SK-N-SH (cell line): ENCODE measurements at regions of chr1 and their contacts with region 1.

Region 1: GRCh38 chr1:225474986-225475820 is 47.4 kb upstream of the LBR start:
- DNase-seq: peak; percentile 93
- H3K4me3 ChIP-seq: peak overlapping the region; percentile 17 to 46; a peak in 2 of 4 replicates
- H3K27ac ChIP-seq: no peak overlapping the region
- H3K4me1 ChIP-seq: peaks cover 0 to 6% of the 10 kb centered on the region in 2 experiments; a peak in 2 of 4 replicates
- H3K27me3 ChIP-seq: no peaks in the 10 kb centered on the region
- CTCF ChIP-seq: peak; percentile 100
- EP300 ChIP-seq: no peak
- RAD21 ChIP-seq: peak; percentile 100

Region 2: DNA sequence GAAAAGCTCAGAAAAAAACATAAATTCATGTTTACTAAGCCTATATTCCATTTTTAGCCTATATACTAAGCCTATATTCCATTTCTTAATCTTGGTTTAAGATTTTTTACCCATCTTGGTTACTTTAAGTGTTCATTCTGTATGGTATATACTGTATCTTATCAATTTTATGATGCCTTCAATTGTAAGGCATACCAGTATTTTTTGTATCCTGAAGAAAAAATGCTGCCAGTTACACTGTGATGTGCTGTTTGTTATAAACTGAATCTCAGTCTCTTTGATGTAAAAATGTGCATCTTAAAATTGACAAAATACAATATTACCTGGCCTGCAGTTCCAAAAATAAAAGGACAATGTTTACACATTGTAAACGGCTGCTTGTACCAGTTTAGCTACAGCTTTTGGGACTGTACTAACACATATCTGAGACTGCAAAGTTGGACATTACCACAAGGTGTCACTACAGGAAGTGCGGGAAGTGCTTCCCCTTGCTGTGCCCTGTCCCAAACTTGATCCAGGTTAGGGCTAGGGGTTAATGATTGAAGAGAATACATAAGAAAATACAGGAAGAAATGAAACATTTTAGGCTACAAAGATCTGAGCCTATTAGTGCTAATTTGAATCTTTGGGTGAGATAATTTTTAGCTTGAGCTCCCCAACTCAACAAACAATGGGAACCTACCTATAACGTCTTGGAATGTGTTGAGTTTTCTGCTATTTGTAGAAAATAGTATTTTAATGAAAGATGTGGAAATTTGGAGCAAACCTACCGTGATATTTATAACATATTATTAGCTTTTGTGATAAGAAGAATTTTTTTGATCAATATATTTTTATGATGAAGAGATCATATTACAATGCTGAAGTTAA is 156.3 kb before region 1 on chr1:
- CTCF ChIA-PET with region 1: interaction called, 22 read pairs
- POLR2A ChIA-PET with region 1: no interaction called
- DNase-seq: peak; percentile 42
- H3K4me3 ChIP-seq: no peak overlapping the region
- H3K27ac ChIP-seq: no peak overlapping the region
- H3K4me1 ChIP-seq: no peaks in the 10 kb centered on the region
- H3K27me3 ChIP-seq: no peaks in the 10 kb centered on the region; the same call in 1 of the 2 replicates
- CTCF ChIP-seq: peak; percentile 78
- EP300 ChIP-seq: no peak
- RAD21 ChIP-seq: peak; percentile 70

Region 3: DNA sequence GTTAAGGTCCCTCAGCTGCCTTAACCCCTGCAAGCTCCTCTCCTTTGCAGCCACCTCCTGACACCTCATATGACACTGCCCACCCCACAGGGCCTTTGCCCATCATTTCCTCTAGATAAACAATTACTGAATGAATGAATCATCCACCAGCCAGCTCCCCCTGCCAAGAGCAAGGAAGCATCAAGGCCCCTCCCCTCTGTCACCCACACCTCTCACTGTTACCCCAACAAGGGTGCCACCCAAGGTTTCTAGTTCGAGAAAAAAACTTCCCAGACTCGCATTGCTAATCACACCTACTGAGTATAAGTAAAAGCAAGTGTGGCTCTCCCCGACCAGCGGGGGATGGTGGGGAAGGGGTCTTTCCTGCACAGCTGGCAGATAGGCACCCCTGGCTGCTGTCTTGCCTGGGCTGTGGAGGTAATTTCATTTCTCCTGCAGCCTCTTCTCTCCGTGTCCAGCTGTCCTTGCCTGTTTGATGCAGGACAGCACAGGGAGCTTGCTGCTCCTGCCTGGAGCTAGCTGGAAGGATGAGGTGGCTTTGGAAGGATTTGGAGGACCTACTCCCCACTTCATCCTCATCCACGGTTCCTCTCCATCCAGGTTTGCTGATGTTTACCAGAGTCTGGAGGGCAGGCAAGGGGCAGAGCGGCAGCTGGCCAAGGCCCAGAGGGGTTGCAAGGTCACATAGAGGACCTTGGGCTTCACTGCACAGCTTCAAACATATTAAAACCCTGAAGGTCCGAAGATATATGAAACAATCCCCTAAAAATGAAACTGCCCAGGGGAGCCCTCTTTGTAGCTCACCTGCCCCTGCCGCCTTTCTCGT is 14.3 kb before region 1 on chr1:
- CTCF ChIA-PET with region 1: interaction called, 98 read pairs
- POLR2A ChIA-PET with region 1: no interaction called
- DNase-seq: peak; percentile 56
- H3K4me3 ChIP-seq: no peak overlapping the region
- H3K27ac ChIP-seq: peak overlapping the region in 1 of 2 experiments; percentile 74; a peak in 2 of 4 replicates
- H3K4me1 ChIP-seq: peaks cover 13 to 35% of the 10 kb centered on the region in 2 experiments; a peak in 3 of 4 replicates
- H3K27me3 ChIP-seq: no peaks in the 10 kb centered on the region
- CTCF ChIP-seq: no peak
- EP300 ChIP-seq: no peak
- RAD21 ChIP-seq: no peak

Region 4: GRCh38 chr1:225652729-225653462 is 177.7 kb after region 1 on chr1 and contains the start of gene ENAH:
- CTCF ChIA-PET with region 1: interaction called, 15 read pairs
- POLR2A ChIA-PET with region 1: no interaction called
- DNase-seq: peak; percentile 96
- H3K4me3 ChIP-seq: peak within 1 kb of the TSS; percentile 96 to 98
- H3K27ac ChIP-seq: peak within 1 kb of the TSS; percentile 95 to 99
- H3K4me1 ChIP-seq: peaks cover 18 to 41% of the 10 kb centered on the region in 2 experiments
- H3K27me3 ChIP-seq: no peaks in the 10 kb centered on the region
- CTCF ChIP-seq: no peak
- EP300 ChIP-seq: no peak
- RAD21 ChIP-seq: no peak
- polyA plus RNA-seq, gene ENAH: 48.9 and 72.0 TPM in 2 replicates

Region 5: GRCh38 chr1:225840223-225840610 is 365.0 kb after region 1 on chr1:
- CTCF ChIA-PET with region 1: interaction called, 22 read pairs
- POLR2A ChIA-PET with region 1: no interaction called
- DNase-seq: no peak
- H3K4me3 ChIP-seq: no peak overlapping the region
- H3K27ac ChIP-seq: no peak overlapping the region
- H3K4me1 ChIP-seq: no peaks in the 10 kb centered on the region; a peak in 1 of 4 replicates
- H3K27me3 ChIP-seq: no peaks in the 10 kb centered on the region
- CTCF ChIP-seq: no peak
- EP300 ChIP-seq: no peak
- RAD21 ChIP-seq: no peak

Region 6: DNA sequence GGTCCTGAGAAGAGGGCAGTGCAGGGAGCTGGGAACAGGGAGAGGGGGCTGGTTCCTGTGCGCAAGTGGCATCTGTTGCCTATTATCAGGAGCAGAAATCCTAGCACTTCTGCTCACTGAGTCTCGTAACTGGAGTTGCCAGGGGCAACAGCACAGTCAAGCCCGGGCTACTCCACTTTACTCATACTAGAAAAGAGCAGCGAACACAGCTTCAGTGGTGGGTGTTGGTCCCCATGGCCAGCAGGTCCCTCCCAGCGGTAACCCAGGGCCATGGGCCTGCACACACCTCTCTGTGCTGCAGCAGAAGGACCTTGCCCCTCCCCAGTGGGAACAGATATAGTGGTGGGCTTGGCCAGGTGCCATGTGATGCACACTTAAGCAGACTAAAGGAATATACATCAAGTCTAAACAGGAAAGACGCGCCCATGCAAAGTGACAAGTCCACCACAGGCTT is 440.4 kb after region 1 on chr1:
- CTCF ChIA-PET with region 1: interaction called, 14 read pairs
- POLR2A ChIA-PET with region 1: no interaction called
- DNase-seq: peak; percentile 89
- H3K4me3 ChIP-seq: no peak overlapping the region
- H3K27ac ChIP-seq: peak overlapping the region; percentile 7 to 77; a peak in 3 of 4 replicates
- H3K4me1 ChIP-seq: peaks cover 14 to 41% of the 10 kb centered on the region in 2 experiments
- H3K27me3 ChIP-seq: no peaks in the 10 kb centered on the region
- CTCF ChIP-seq: no peak
- EP300 ChIP-seq: peak in 1 of 2 experiments; percentile 42; a peak in 2 of 4 replicates
- RAD21 ChIP-seq: peak; percentile 31; the same call in 1 of the 2 replicates

Region 7: GRCh38 chr1:225977937-225978748 is 502.9 kb after region 1 on chr1:
- CTCF ChIA-PET with region 1: interaction called, 130 read pairs
- POLR2A ChIA-PET with region 1: no interaction called
- DNase-seq: no peak
- H3K4me3 ChIP-seq: no peak overlapping the region
- H3K27ac ChIP-seq: no peak overlapping the region
- H3K4me1 ChIP-seq: no peaks in the 10 kb centered on the region; a peak in 1 of 4 replicates
- H3K27me3 ChIP-seq: no peaks in the 10 kb centered on the region
- CTCF ChIP-seq: no peak
- EP300 ChIP-seq: no peak
- RAD21 ChIP-seq: no peak